ENCODE measurements at regions of chr5 and their contacts with region 1.

Region 1: GRCh38 chr5:80481019-80481893 is 6.6 kb upstream of the FAM151B start:
- DNase-seq: no peak
- H3K4me3 ChIP-seq: no peak overlapping the region
- H3K27me3 ChIP-seq: no peaks in the 10 kb centered on the region
- CTCF ChIP-seq: peak; percentile 92

Region 2: GRCh38 chr5:80268916-80269315 is 212.3 kb before region 1 on chr5:
- CTCF ChIA-PET with region 1: no interaction called
- POLR2A ChIA-PET with region 1: no interaction called
- DNase-seq: no peak
- H3K4me3 ChIP-seq: no peak overlapping the region
- H3K27me3 ChIP-seq: no peaks in the 10 kb centered on the region
- CTCF ChIP-seq: no peak

Region 3: GRCh38 chr5:80466669-80467485 is 14.4 kb before region 1 on chr5:
- CTCF ChIA-PET with region 1: interaction called, 19 read pairs
- POLR2A ChIA-PET with region 1: no interaction called
- DNase-seq: no peak
- H3K4me3 ChIP-seq: no peak overlapping the region
- H3K27me3 ChIP-seq: no peaks in the 10 kb centered on the region
- CTCF ChIP-seq: no peak

Region 4: GRCh38 chr5:80672140-80672736 is 191.0 kb after region 1 on chr5:
- CTCF ChIA-PET with region 1: interaction called, 12 read pairs
- POLR2A ChIA-PET with region 1: no interaction called
- DNase-seq: no peak
- H3K4me3 ChIP-seq: no peak overlapping the region
- H3K27me3 ChIP-seq: no peaks in the 10 kb centered on the region
- CTCF ChIP-seq: peak; percentile 84